H1 (cell line): ENCODE measurements at regions of chr11 and their contacts with region 1.

Region 1: GRCh38 chr11:132126973-132127899 is 756.8 kb downstream of the NTM start:
- DNase-seq: no peak
- H3K4me3 ChIP-seq: peak overlapping the region in 2 of 4 experiments; percentile 26 to 50; a peak in 4 of 8 replicates
- H3K27ac ChIP-seq: no peak overlapping the region
- H3K4me1 ChIP-seq: peaks cover 15 to 32% (median 19%) of the 10 kb centered on the region in 4 experiments
- H3K27me3 ChIP-seq: peaks cover 0 to 2% (median 0%) of the 10 kb centered on the region in 4 experiments; a peak in 2 of 7 replicates
- CTCF ChIP-seq: peak; percentile 44 to 83 (median 69)
- EP300 ChIP-seq: no peak
- POLR2A ChIP-seq: no peak
- RAD21 ChIP-seq: peak; percentile 84 to 89

Region 2: GRCh38 chr11:131694526-131695424 is 432.5 kb before region 1 on chr11:
- CTCF ChIA-PET with region 1: interaction called, 37 read pairs
- POLR2A ChIA-PET with region 1: interaction called, 3 read pairs
- DNase-seq: peak; percentile 63 to 96
- H3K4me3 ChIP-seq: peak overlapping the region in 1 of 4 experiments; percentile 35; a peak in 1 of 8 replicates
- H3K27ac ChIP-seq: no peak overlapping the region
- H3K4me1 ChIP-seq: peaks cover 0 to 5% (median 3%) of the 10 kb centered on the region in 4 experiments; a peak in 5 of 7 replicates
- H3K27me3 ChIP-seq: peaks cover 0 to 38% (median 21%) of the 10 kb centered on the region in 4 experiments; a peak in 6 of 7 replicates
- CTCF ChIP-seq: peak; percentile 94 to 99 (median 99)
- EP300 ChIP-seq: no peak
- POLR2A ChIP-seq: no peak
- RAD21 ChIP-seq: peak; percentile 89 to 90

Region 3: GRCh38 chr11:131910523-131911387 is 216.5 kb before region 1 on chr11:
- CTCF ChIA-PET with region 1: interaction called, 33 read pairs
- POLR2A ChIA-PET with region 1: interaction called, 3 read pairs
- DNase-seq: peak in 1 of 2 experiments; percentile 74
- H3K4me3 ChIP-seq: peak overlapping the region; percentile 69 to 85 (median 76)
- H3K27ac ChIP-seq: no peak overlapping the region
- H3K4me1 ChIP-seq: peaks cover 4 to 15% (median 7%) of the 10 kb centered on the region in 4 experiments; a peak in 6 of 7 replicates
- H3K27me3 ChIP-seq: no peaks in the 10 kb centered on the region; a peak in 1 of 7 replicates
- CTCF ChIP-seq: no peak
- EP300 ChIP-seq: no peak
- POLR2A ChIP-seq: no peak
- RAD21 ChIP-seq: 0 out of 4 replicates have a peak, but pooled peaks of 1 of the 2 experiments have one; percentile 3

Region 4: GRCh38 chr11:132106096-132106982 is 20.9 kb before region 1 on chr11:
- CTCF ChIA-PET with region 1: interaction called, 51 read pairs
- POLR2A ChIA-PET with region 1: interaction called, 3 read pairs
- DNase-seq: no peak
- H3K4me3 ChIP-seq: no peak overlapping the region
- H3K27ac ChIP-seq: no peak overlapping the region
- H3K4me1 ChIP-seq: peaks cover 4 to 16% (median 7%) of the 10 kb centered on the region in 4 experiments
- H3K27me3 ChIP-seq: no peaks in the 10 kb centered on the region
- CTCF ChIP-seq: no peak
- EP300 ChIP-seq: no peak
- POLR2A ChIP-seq: no peak
- RAD21 ChIP-seq: no peak

Region 5: GRCh38 chr11:132140056-132140455 is 12.8 kb after region 1 on chr11:
- CTCF ChIA-PET with region 1: interaction called, 16 read pairs
- POLR2A ChIA-PET with region 1: no interaction called
- DNase-seq: no peak
- H3K4me3 ChIP-seq: no peak overlapping the region
- H3K27ac ChIP-seq: no peak overlapping the region
- H3K4me1 ChIP-seq: no peaks in the 10 kb centered on the region; a peak in 1 of 7 replicates
- H3K27me3 ChIP-seq: no peaks in the 10 kb centered on the region
- CTCF ChIP-seq: peak; percentile 29 to 57 (median 35); a peak in 3 of 4 replicates
- EP300 ChIP-seq: no peak
- POLR2A ChIP-seq: no peak
- RAD21 ChIP-seq: peak; percentile 42 to 57